ENCODE measurements at regions of chr5 and their contacts with region 1.

Region 1: GRCh38 chr5:157603333-157604190 is 28.0 kb upstream of the ADAM19 start:
- DNase-seq: peak in 8 of 9 donors; percentile 16 to 65 (median 50)
- ATAC-seq: peak; percentile 90
- H3K4me3 ChIP-seq: peak overlapping the region; percentile 1
- H3K4me3 Mint-ChIP-seq: peak overlapping the region in 9 of 10 donors; percentile 0 to 74 (median 63)
- H3K27ac ChIP-seq: no peak overlapping the region
- H3K27ac Mint-ChIP-seq: peak overlapping the region in 7 of 9 donors; percentile 1 to 85 (median 49)
- H3K4me1 ChIP-seq: peaks cover 26 to 39% of the 10 kb centered on the region in 2 donors
- H3K4me1 Mint-ChIP-seq: peaks cover 30 to 81% (median 40%) of the 10 kb centered on the region in 7 donors
- H3K27me3 ChIP-seq: no peaks in the 10 kb centered on the region
- H3K27me3 Mint-ChIP-seq: no peaks in the 10 kb centered on the region

Region 2: GRCh38 chr5:156920042-156920860 is 683.3 kb before region 1 on chr5:
- CTCF ChIA-PET with region 1: no interaction called
- POLR2A ChIA-PET with region 1: no interaction called
- intact Hi-C with region 1: loop called in 1 of 2 experiments (anchors 5 kb)
- DNase-seq: peak in 1 of 9 donors; percentile 76
- ATAC-seq: peak; percentile 46
- H3K4me3 ChIP-seq: no peak overlapping the region
- H3K4me3 Mint-ChIP-seq: peak overlapping the region in 1 of 10 donors; percentile 79
- H3K27ac ChIP-seq: no peak overlapping the region
- H3K27ac Mint-ChIP-seq: peak overlapping the region in 7 of 9 donors; percentile 18 to 94 (median 52)
- H3K4me1 ChIP-seq: peaks cover 9 to 10% of the 10 kb centered on the region in 2 donors
- H3K4me1 Mint-ChIP-seq: peaks cover 12 to 78% (median 67%) of the 10 kb centered on the region in 7 donors
- H3K27me3 ChIP-seq: no peaks in the 10 kb centered on the region
- H3K27me3 Mint-ChIP-seq: no peaks in the 10 kb centered on the region

Region 3: DNA sequence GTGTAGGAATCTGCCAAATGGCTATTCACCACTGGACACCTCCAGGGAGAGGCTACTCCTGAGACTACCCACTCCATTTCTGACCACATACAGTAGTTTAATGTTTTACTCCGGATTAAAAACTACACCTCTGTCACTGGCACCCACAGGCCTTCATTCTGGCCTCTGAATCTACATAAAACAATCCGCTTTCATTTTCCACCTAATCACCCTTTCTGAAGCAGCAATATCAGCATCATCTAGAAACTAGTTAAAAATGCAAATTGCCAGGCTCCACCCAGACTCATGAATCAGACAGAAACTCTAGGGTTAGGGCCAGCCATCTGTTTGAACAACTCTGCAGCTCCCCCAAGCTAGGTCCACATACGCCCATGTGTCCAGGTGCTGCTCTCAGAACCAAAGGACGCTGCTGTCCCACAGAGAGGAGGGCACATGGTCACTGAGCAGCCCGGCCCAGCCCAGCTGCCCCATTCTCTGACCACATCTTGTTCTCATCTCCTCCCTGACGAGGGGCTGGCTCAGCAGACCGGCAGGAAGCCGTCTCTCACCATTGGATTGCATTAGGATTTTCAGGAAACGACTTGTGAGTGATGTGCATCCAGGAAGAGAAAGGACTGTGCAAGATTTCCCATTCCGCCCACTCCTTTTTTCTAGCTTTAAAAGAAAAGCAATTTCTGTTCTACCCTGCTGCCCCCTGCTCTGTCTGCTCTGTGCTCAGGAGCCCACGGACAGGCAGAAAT is 62.7 kb before region 1 on chr5:
- CTCF ChIA-PET with region 1: no interaction called
- POLR2A ChIA-PET with region 1: no interaction called
- intact Hi-C with region 1: loop called (anchors 1 to 5 kb)
- DNase-seq: peak in 1 of 9 donors; percentile 57
- ATAC-seq: peak; percentile 51
- H3K4me3 ChIP-seq: peak overlapping the region; percentile 19
- H3K4me3 Mint-ChIP-seq: peak overlapping the region in 5 of 10 donors; percentile 7 to 81 (median 12)
- H3K27ac ChIP-seq: no peak overlapping the region
- H3K27ac Mint-ChIP-seq: peak overlapping the region in 7 of 9 donors; percentile 2 to 99 (median 45)
- H3K4me1 ChIP-seq: peaks cover 14 to 65% of the 10 kb centered on the region in 2 donors
- H3K4me1 Mint-ChIP-seq: peaks cover 12 to 92% (median 29%) of the 10 kb centered on the region in 7 donors
- H3K27me3 ChIP-seq: no peaks in the 10 kb centered on the region
- H3K27me3 Mint-ChIP-seq: no peaks in the 10 kb centered on the region

Region 4: DNA sequence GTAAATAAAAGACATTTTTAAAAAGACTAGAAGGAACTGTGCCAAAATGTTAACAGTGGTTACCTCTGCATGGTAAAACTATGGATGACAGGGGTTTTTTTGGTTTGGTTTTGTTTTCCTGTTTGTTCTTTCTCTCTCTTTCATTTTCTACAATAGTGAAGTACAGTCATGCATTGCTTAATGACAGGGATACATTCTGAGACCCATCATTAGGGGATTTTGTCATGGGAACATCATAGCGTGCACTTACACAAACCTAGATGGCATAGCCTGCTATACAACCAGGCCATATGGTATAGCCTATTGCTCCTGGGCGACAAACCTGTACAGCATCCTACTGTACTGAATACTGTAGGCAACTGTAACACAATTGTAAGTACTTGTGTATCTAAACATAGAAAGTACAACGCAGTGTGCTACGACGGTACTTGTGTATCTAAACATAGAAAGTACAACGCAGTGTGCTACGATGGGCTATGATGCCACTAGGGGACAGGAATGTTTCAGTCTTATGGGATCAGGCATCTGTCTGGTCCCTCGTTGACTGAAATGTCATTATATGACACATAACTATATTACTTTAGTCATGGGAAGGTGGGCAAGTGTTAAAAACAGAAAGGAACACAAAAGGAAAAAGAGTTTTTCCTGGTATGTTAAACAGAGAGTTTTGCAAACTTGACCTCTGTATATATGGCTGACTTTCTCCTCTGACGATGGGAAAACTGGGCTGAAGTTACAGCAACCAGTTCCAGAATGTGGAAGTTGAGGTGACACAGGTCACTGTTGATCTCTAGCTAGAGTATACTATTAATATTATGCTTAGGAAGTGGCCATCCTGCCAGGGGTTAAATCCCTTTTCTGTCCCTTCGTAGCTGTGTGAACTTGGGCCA is 20.6 kb before region 1 on chr5:
- CTCF ChIA-PET with region 1: no interaction called
- POLR2A ChIA-PET with region 1: no interaction called
- intact Hi-C with region 1: loop called in 1 of 2 experiments (anchors 1 kb)
- DNase-seq: no peak
- ATAC-seq: peak; percentile 6
- H3K4me3 ChIP-seq: no peak overlapping the region
- H3K4me3 Mint-ChIP-seq: peak overlapping the region in 1 of 10 donors; percentile 55
- H3K27ac ChIP-seq: no peak overlapping the region
- H3K27ac Mint-ChIP-seq: peak overlapping the region in 1 of 9 donors; percentile 75
- H3K4me1 ChIP-seq: peaks cover 0 to 6% of the 10 kb centered on the region in 2 donors
- H3K4me1 Mint-ChIP-seq: peaks cover 0 to 69% (median 0%) of the 10 kb centered on the region in 7 donors
- H3K27me3 ChIP-seq: no peaks in the 10 kb centered on the region
- H3K27me3 Mint-ChIP-seq: no peaks in the 10 kb centered on the region

Region 5: DNA sequence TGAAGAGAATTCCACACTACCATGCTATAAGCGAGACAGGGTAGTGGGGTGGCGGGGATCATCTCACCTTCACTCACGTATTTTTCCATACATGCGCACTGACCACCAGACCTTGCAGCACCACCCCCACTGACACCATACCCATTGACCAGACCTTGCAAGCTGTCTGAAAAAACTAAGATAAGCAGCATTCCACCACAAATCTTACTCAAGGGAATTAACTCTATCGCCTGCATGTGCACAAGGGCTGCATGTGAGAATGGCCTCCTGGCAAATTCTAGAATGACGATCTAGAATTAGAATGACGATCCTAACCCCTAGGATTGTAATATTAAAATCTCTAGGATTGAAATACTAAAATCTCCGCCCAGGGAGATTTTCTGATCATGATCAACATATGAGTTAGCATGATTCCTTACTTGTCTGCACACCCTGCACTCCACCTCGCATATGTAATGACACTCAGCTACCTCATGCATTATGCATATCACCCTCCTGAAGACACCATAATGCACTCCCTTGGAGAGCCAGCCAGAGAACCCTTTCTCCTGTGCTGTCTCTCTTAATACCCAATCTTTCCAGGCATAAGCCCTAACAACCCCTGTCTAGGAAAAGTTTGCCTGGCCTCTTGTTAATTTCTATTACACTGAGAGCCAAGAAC is 37.0 kb after region 1 on chr5:
- CTCF ChIA-PET with region 1: no interaction called
- POLR2A ChIA-PET with region 1: no interaction called
- intact Hi-C with region 1: no loop called
- DNase-seq: no peak
- ATAC-seq: no peak
- H3K4me3 ChIP-seq: no peak overlapping the region
- H3K4me3 Mint-ChIP-seq: no peak overlapping the region
- H3K27ac ChIP-seq: no peak overlapping the region
- H3K27ac Mint-ChIP-seq: no peak overlapping the region
- H3K4me1 ChIP-seq: no peaks in the 10 kb centered on the region
- H3K4me1 Mint-ChIP-seq: no peaks in the 10 kb centered on the region
- H3K27me3 ChIP-seq: no peaks in the 10 kb centered on the region
- H3K27me3 Mint-ChIP-seq: peaks cover 0 to 6% (median 0%) of the 10 kb centered on the region in 5 donors

Region 6: GRCh38 chr5:157670662-157671591 is 67.4 kb after region 1 on chr5 and contains the start of gene C5orf52:
- CTCF ChIA-PET with region 1: no interaction called
- POLR2A ChIA-PET with region 1: no interaction called
- intact Hi-C with region 1: loop called in 1 of 2 experiments (anchors 2 kb)
- DNase-seq: peak in 1 of 9 donors; percentile 52
- ATAC-seq: peak; percentile 41
- H3K4me3 ChIP-seq: peak within 1 kb of the TSS; percentile 38
- H3K4me3 Mint-ChIP-seq: peak within 1 kb of the TSS; percentile 69 to 95 (median 82)
- H3K27ac ChIP-seq: no peak within 1 kb of the TSS
- H3K27ac Mint-ChIP-seq: peak within 1 kb of the TSS in 4 of 9 donors; percentile 4 to 85 (median 22)
- H3K4me1 ChIP-seq: peaks cover 0 to 8% of the 10 kb centered on the region in 2 donors
- H3K4me1 Mint-ChIP-seq: peaks cover 16 to 31% (median 25%) of the 10 kb centered on the region in 7 donors
- H3K27me3 ChIP-seq: peaks cover 0 to 15% of the 10 kb centered on the region in 2 donors
- H3K27me3 Mint-ChIP-seq: peaks cover 25 to 49% (median 44%) of the 10 kb centered on the region in 5 donors
- total RNA-seq, gene C5orf52: not detected

Region 7: DNA sequence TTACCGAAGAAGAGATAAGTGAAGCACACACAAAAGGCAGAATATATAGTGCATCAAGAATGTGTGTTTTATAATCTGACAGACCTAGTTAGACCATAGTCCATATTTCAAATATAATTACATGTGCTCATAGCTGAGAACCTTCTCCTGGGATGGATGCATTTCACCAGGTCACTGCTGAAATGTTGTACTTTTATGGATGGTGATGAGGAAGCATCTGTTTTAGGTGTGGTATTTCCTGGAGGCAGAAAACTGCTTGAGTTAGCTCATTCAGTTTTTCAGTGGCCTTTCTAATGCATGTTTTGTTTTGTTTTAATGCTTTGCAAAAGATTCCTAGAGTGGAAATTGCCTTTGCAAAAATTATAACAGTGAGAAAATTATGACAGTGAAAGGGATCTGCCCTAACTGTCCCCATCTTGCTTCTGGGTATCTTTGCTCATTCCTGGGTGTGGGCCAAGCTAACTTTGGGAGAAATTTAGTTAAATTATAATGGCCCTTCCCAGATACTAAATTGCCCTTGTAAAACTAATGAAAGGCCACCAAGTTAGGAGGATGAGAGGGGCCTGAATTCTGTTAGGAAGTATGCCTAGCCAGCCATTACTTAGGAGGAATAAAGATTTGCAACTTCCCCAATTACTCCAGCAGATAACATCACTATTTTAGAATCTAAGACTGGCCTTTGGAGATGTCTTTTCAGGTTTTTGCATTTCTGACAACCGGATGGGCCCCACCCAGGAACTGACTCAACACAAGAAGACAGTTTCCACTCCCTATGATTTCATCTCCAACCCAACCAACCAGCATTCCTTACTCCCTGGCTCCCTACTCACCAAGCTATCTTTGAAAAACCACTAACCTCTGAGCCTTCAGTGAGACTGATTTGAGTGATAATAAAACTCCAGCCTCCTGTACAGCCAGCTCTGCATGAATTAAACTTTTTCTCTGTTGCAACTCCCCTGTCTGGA is 1733.7 kb after region 1 on chr5:
- CTCF ChIA-PET with region 1: no interaction called
- POLR2A ChIA-PET with region 1: no interaction called
- intact Hi-C with region 1: loop called in 1 of 2 experiments (anchors 5 kb)
- DNase-seq: peak in 8 of 9 donors; percentile 17 to 43 (median 34)
- ATAC-seq: peak; percentile 74
- H3K4me3 ChIP-seq: no peak overlapping the region
- H3K4me3 Mint-ChIP-seq: peak overlapping the region; percentile 20 to 73 (median 55)
- H3K27ac ChIP-seq: peak overlapping the region; percentile 20
- H3K27ac Mint-ChIP-seq: peak overlapping the region; percentile 67 to 91 (median 86)
- H3K4me1 ChIP-seq: peaks cover 25 to 40% of the 10 kb centered on the region in 2 donors
- H3K4me1 Mint-ChIP-seq: peaks cover 26 to 82% (median 58%) of the 10 kb centered on the region in 7 donors
- H3K27me3 ChIP-seq: no peaks in the 10 kb centered on the region
- H3K27me3 Mint-ChIP-seq: no peaks in the 10 kb centered on the region

Measured in naive thymus-derived CD4-positive, alpha-beta T cell (primary cell).